GM10248 (cell line): ENCODE measurements at regions of chr2 and their contacts with region 1.

Region 1: GRCh38 chr2:200864176-200864976 is at the start of gene CLK1:
- DNase-seq: peak; percentile 96
- CTCF ChIP-seq: no peak

Region 2: GRCh38 chr2:200713003-200713703 is 151.2 kb before region 1 on chr2:
- CTCF ChIA-PET with region 1: interaction called, 3 read pairs
- POLR2A ChIA-PET with region 1: interaction called, 10 read pairs
- DNase-seq: peak; percentile 88
- CTCF ChIP-seq: peak; percentile 64

Region 3: DNA sequence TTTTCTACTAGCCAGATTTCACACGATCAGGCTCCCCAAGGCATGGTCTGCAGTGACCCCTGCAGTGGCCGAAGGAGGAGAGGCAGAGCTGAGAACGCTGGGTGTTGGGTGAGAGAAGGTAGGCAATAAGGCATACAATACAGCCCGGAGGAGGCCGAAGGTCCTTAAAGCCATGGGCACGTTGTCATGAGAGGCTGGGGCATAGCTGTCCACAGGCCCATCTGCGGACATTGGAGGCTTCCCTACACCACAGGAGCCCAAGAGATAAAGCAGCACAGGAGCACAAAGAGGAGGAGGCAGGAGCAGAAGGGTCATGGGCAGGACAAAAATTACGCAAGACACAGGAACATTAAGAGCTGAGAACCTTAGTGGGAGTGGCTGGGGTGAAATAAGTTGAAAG is 69.3 kb before region 1 on chr2:
- CTCF ChIA-PET with region 1: no interaction called
- POLR2A ChIA-PET with region 1: no interaction called
- DNase-seq: no peak
- CTCF ChIP-seq: no peak

Region 4: DNA sequence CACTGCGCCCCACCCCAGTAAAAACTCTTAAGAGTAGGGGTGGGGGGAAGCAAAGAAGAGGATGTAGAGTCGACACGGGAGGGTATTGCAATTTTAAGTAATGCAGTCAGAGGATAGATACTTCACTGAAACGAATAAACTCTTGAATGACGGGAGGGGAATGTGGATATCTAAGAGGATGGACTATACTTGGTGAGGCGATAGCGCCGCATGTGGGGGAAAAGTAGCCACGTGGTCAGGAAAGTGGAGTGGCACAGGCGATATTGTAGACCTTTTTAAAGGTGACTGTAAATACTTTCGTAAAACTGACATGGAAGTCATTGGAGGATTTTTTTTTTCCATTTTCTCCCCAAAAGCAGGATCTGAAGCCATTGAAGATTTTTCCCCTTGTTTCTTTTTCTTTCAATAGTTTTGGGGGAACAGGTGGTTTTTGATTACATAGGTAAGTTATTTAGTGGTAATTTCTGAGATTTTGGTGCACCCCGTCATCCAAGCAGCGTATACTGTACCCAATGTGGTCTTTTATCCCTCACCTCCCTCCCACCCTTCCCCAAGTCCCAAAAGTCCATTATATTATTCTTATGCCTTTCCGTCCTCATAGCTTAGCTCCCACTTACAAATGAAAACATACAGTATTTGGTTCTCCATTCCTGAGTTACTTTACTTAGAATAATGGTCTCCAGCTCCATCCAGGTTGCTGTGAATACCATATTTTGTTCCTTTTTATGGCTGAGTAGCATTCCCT is 13.7 kb before region 1 on chr2:
- CTCF ChIA-PET with region 1: interaction called, 9 read pairs
- POLR2A ChIA-PET with region 1: interaction called, 26 read pairs
- DNase-seq: no peak
- CTCF ChIP-seq: no peak

Region 5: DNA sequence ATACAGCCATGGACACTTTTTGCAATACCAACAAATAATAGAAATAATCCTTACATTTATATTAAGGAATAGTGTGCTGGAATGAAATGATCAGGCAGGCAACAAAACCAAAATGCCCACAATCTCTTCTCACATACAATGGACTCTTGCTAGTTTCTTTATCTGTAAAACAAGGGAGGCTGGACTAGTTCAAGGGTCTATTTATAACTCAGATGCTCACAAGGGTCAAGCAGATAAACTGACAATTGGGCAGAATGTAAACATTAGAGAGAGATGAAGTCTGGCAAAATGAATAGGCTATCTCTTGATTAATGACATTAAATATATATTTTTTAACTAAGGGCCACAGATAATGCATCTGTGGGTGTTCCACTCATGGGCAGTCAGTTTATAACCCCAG is 13.1 kb after region 1 on chr2:
- CTCF ChIA-PET with region 1: interaction called, 10 read pairs
- POLR2A ChIA-PET with region 1: interaction called, 5 read pairs
- DNase-seq: no peak
- CTCF ChIP-seq: no peak

Region 6: GRCh38 chr2:200888704-200889625 is 24.6 kb after region 1 on chr2 and contains the starts of genes NIF3L1 and PPIL3:
- CTCF ChIA-PET with region 1: interaction called, 3 read pairs
- POLR2A ChIA-PET with region 1: interaction called, 23 read pairs
- DNase-seq: peak; percentile 91
- CTCF ChIP-seq: no peak

Region 7: DNA sequence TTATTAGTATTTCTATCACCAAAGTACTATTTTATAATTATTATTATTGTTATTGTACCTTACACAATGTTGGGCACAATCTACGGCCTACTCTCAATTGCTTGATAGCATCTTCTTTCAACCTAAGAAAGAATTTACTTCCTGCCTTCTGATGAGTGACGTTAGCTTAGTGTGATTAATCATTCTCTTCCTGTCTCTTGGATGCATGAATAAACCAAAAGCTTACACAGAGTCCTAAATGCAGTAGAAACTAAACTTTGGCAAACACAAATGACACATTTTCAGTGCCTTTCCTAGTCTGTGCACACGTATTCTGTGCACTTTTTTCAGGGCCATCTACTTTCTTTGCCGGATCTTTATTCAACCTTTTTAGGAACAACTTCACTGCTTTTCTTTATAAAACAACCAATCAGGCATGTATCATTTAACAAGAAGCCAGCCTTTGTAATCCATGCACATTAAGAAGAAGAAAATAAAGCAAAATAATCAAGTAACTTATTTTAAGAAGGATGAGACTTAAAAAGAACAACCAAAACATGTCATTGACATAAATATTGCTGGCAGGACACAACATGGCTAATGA is 567.8 kb after region 1 on chr2:
- CTCF ChIA-PET with region 1: no interaction called
- POLR2A ChIA-PET with region 1: no interaction called
- DNase-seq: no peak
- CTCF ChIP-seq: no peak